ENCODE measurements at regions of chr6 and their contacts with region 1.

Region 1: GRCh38 chr6:152863618-152864326 is 113.2 kb downstream of the VIP start:
- DNase-seq: peak; percentile 78
- H3K4me3 ChIP-seq: no peak overlapping the region
- H3K27ac ChIP-seq: no peak overlapping the region
- H3K4me1 ChIP-seq: no peaks in the 10 kb centered on the region
- H3K27me3 ChIP-seq: peaks cover 50% of the 10 kb centered on the region
- CTCF ChIP-seq: peak; percentile 75

Region 2: GRCh38 chr6:152897799-152898399 is 34.1 kb after region 1 on chr6:
- CTCF ChIA-PET with region 1: no interaction called
- POLR2A ChIA-PET with region 1: no interaction called
- intact Hi-C with region 1: loop called (anchors 5 kb)
- DNase-seq: peak; percentile 77
- H3K4me3 ChIP-seq: no peak overlapping the region
- H3K27ac ChIP-seq: no peak overlapping the region
- H3K4me1 ChIP-seq: no peaks in the 10 kb centered on the region
- H3K27me3 ChIP-seq: peaks cover 36% of the 10 kb centered on the region
- CTCF ChIP-seq: peak; percentile 90

Region 3: DNA sequence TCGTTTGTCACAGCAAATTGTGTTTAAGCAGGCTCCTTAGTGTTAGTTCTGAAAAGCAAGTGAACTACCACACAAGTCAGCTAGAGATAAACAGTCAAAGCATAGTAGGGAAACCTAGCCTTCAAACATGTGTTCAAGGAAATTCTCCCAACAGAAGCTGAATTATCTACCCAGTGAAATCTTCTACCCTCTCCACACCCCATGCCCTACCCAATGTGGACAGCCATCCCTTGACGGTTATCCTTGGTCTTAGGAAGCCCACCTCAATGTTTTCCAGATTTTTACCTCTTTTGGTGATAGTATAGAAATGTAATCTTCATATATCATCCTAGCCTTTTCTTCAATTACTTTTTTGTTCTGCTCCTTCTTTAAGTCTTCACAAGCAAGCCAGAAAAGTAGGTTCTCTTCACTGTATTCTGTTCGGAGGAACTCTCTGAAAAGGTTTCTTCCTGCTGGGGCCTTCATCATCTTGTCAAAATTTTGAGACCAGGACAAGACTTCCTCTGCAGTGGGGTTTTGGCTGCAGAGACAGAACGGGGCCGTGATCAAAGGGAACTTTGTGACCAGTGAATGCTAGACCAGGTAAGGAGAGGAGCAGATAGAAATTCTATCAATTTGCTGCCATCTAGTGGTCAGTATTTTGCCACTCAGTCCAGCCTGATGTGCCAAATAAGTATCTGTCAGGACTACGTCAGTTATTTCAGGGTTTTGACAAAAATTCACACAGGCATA is 160.4 kb after region 1 on chr6:
- CTCF ChIA-PET with region 1: no interaction called
- POLR2A ChIA-PET with region 1: no interaction called
- intact Hi-C with region 1: loop called (anchors 2 kb)
- DNase-seq: peak; percentile 72
- H3K4me3 ChIP-seq: no peak overlapping the region
- H3K27ac ChIP-seq: no peak overlapping the region
- H3K4me1 ChIP-seq: no peaks in the 10 kb centered on the region
- H3K27me3 ChIP-seq: no peaks in the 10 kb centered on the region
- CTCF ChIP-seq: peak; percentile 84

Region 4: GRCh38 chr6:153172815-153173214 is 309.0 kb after region 1 on chr6:
- CTCF ChIA-PET with region 1: no interaction called
- POLR2A ChIA-PET with region 1: no interaction called
- intact Hi-C with region 1: no loop called
- DNase-seq: no peak
- H3K4me3 ChIP-seq: no peak overlapping the region
- H3K27ac ChIP-seq: no peak overlapping the region
- H3K4me1 ChIP-seq: peaks cover 2% of the 10 kb centered on the region
- H3K27me3 ChIP-seq: no peaks in the 10 kb centered on the region
- CTCF ChIP-seq: no peak